ENCODE measurements at regions of chr1 and their contacts with region 1.

Region 1: GRCh38 chr1:170578359-170578758 is 46.4 kb downstream of the GORAB start:
- DNase-seq: no peak
- H3K4me3 ChIP-seq: no peak overlapping the region
- H3K27ac ChIP-seq: no peak overlapping the region
- H3K4me1 ChIP-seq: no peaks in the 10 kb centered on the region
- H3K27me3 ChIP-seq: no peaks in the 10 kb centered on the region
- CTCF ChIP-seq: no peak
- EP300 ChIP-seq: no peak
- POLR2A ChIP-seq: no peak

Region 2: GRCh38 chr1:169288011-169288414 is 1290.3 kb before region 1 on chr1:
- in situ Hi-C with region 1: no loop called
- intact Hi-C with region 1: no loop called
- DNase-seq: no peak
- H3K4me3 ChIP-seq: no peak overlapping the region
- H3K27ac ChIP-seq: no peak overlapping the region
- H3K4me1 ChIP-seq: no peaks in the 10 kb centered on the region
- H3K27me3 ChIP-seq: no peaks in the 10 kb centered on the region
- CTCF ChIP-seq: no peak
- EP300 ChIP-seq: no peak
- POLR2A ChIP-seq: no peak

Region 3: DNA sequence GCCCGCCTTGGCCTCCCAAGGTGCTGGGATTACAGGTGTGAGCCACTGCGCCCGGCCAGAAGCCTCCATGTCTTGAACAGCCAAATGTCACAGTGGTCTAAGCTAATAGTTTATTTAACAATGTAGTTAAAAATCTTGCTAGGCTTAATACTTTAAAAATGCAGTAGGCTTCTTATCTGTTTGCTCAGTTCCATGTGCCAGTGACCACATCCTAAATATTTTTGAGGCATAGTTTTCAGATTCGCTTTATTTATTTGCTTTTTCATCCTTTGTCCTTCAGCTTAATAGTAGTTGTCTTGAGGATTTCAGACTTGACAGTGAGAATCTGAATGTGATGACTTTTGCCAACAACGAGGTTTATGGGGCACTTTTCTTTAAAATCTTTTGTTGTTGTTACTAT is 25.7 kb after region 1 on chr1:
- in situ Hi-C with region 1: no loop called
- intact Hi-C with region 1: no loop called
- DNase-seq: no peak
- H3K4me3 ChIP-seq: no peak overlapping the region
- H3K27ac ChIP-seq: no peak overlapping the region
- H3K4me1 ChIP-seq: no peaks in the 10 kb centered on the region
- H3K27me3 ChIP-seq: no peaks in the 10 kb centered on the region
- CTCF ChIP-seq: no peak
- EP300 ChIP-seq: no peak
- POLR2A ChIP-seq: no peak

Region 4: GRCh38 chr1:171081314-171081753 is 503.0 kb after region 1 on chr1:
- in situ Hi-C with region 1: no loop called
- intact Hi-C with region 1: loop called (anchors 5 kb)
- DNase-seq: no peak
- H3K4me3 ChIP-seq: no peak overlapping the region
- H3K27ac ChIP-seq: peak overlapping the region in 3 of 4 donors; percentile 38 to 60 (median 55)
- H3K4me1 ChIP-seq: peaks cover 0 to 17% (median 8%) of the 10 kb centered on the region in 4 donors
- H3K27me3 ChIP-seq: no peaks in the 10 kb centered on the region
- CTCF ChIP-seq: peak; percentile 33 to 46 (median 39)
- EP300 ChIP-seq: no peak
- POLR2A ChIP-seq: no peak